CD4-positive, alpha-beta T cell (primary cell): ENCODE measurements at regions of chr6 and their contacts with region 1.

Region 1: GRCh38 chr6:95577304-95578105 is at the start of gene MANEA:
- DNase-seq: peak; percentile 59 to 93 (median 76)
- ATAC-seq: peak; percentile 84
- H3K4me3 ChIP-seq: peak within 1 kb of the TSS; percentile 91
- H3K4me3 Mint-ChIP-seq: peak within 1 kb of the TSS; percentile 95
- H3K27ac ChIP-seq: peak within 1 kb of the TSS; percentile 76 to 84
- H3K27ac Mint-ChIP-seq: peak within 1 kb of the TSS; percentile 95
- H3K4me1 ChIP-seq: peaks cover 11% of the 10 kb centered on the region
- H3K4me1 Mint-ChIP-seq: peaks cover 77% of the 10 kb centered on the region
- H3K27me3 ChIP-seq: no peaks in the 10 kb centered on the region
- H3K27me3 Mint-ChIP-seq: no peaks in the 10 kb centered on the region
- CTCF ChIP-seq: no peak
- total RNA-seq, gene MANEA: 6.1 to 8.0 TPM

Region 2: GRCh38 chr6:95478941-95479340 is 98.6 kb before region 1 on chr6:
- CTCF ChIA-PET with region 1: no interaction called
- POLR2A ChIA-PET with region 1: no interaction called
- intact Hi-C with region 1: no loop called
- DNase-seq: no peak
- ATAC-seq: no peak
- H3K4me3 ChIP-seq: no peak overlapping the region
- H3K4me3 Mint-ChIP-seq: no peak overlapping the region
- H3K27ac ChIP-seq: no peak overlapping the region
- H3K27ac Mint-ChIP-seq: no peak overlapping the region
- H3K4me1 ChIP-seq: no peaks in the 10 kb centered on the region
- H3K4me1 Mint-ChIP-seq: no peaks in the 10 kb centered on the region
- H3K27me3 ChIP-seq: no peaks in the 10 kb centered on the region
- H3K27me3 Mint-ChIP-seq: no peaks in the 10 kb centered on the region
- CTCF ChIP-seq: no peak

Region 3: GRCh38 chr6:95587989-95588388 is 10.5 kb after region 1 on chr6:
- CTCF ChIA-PET with region 1: interaction called, 5 read pairs
- POLR2A ChIA-PET with region 1: interaction called, 18 read pairs
- intact Hi-C with region 1: loop called in 1 of 2 experiments (anchors 2 kb)
- DNase-seq: no peak
- ATAC-seq: no peak
- H3K4me3 ChIP-seq: no peak overlapping the region
- H3K4me3 Mint-ChIP-seq: peak overlapping the region; percentile 5
- H3K27ac ChIP-seq: no peak overlapping the region
- H3K27ac Mint-ChIP-seq: no peak overlapping the region
- H3K4me1 ChIP-seq: no peaks in the 10 kb centered on the region
- H3K4me1 Mint-ChIP-seq: peaks cover 51% of the 10 kb centered on the region
- H3K27me3 ChIP-seq: no peaks in the 10 kb centered on the region
- H3K27me3 Mint-ChIP-seq: no peaks in the 10 kb centered on the region
- CTCF ChIP-seq: no peak

Region 4: GRCh38 chr6:96110878-96111277 is 533.4 kb after region 1 on chr6:
- CTCF ChIA-PET with region 1: no interaction called
- POLR2A ChIA-PET with region 1: no interaction called
- intact Hi-C with region 1: no loop called
- DNase-seq: no peak
- ATAC-seq: no peak
- H3K4me3 ChIP-seq: no peak overlapping the region
- H3K4me3 Mint-ChIP-seq: no peak overlapping the region
- H3K27ac ChIP-seq: no peak overlapping the region
- H3K27ac Mint-ChIP-seq: no peak overlapping the region
- H3K4me1 ChIP-seq: no peaks in the 10 kb centered on the region
- H3K4me1 Mint-ChIP-seq: no peaks in the 10 kb centered on the region
- H3K27me3 ChIP-seq: no peaks in the 10 kb centered on the region
- H3K27me3 Mint-ChIP-seq: no peaks in the 10 kb centered on the region
- CTCF ChIP-seq: no peak

Region 5: DNA sequence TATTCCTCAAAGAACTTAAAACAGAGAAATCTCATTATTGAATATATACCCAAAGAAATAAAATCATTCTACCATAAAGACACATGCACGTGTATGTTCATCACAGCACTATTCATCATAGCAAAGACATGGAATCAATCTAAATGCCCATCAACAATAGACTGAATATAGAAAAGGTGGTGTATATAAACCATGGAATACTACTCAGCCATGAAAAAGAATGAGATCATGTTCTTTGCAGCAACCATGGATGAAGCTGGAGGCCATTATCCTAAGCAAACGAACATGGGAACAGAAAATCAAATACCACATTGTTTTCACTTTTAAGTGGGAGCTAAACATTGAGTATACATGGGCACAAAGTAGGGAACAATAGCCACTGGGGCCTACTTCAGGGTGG is 1272.1 kb after region 1 on chr6:
- CTCF ChIA-PET with region 1: no interaction called
- POLR2A ChIA-PET with region 1: no interaction called
- intact Hi-C with region 1: loop called in 1 of 2 experiments (anchors 5 kb)
- DNase-seq: no peak
- ATAC-seq: no peak
- H3K4me3 ChIP-seq: no peak overlapping the region
- H3K4me3 Mint-ChIP-seq: no peak overlapping the region
- H3K27ac ChIP-seq: no peak overlapping the region
- H3K27ac Mint-ChIP-seq: no peak overlapping the region
- H3K4me1 ChIP-seq: no peaks in the 10 kb centered on the region
- H3K4me1 Mint-ChIP-seq: no peaks in the 10 kb centered on the region
- H3K27me3 ChIP-seq: no peaks in the 10 kb centered on the region
- H3K27me3 Mint-ChIP-seq: peaks cover 33% of the 10 kb centered on the region
- CTCF ChIP-seq: no peak

Region 6: GRCh38 chr6:96923871-96924493 is 1346.5 kb after region 1 on chr6:
- CTCF ChIA-PET with region 1: no interaction called
- POLR2A ChIA-PET with region 1: interaction called, 12 read pairs
- intact Hi-C with region 1: loop called (anchors 5 to 10 kb)
- DNase-seq: peak in 5 of 14 experiments; percentile 0 to 74 (median 2)
- ATAC-seq: no peak
- H3K4me3 ChIP-seq: peak overlapping the region; percentile 72
- H3K4me3 Mint-ChIP-seq: peak overlapping the region; percentile 93
- H3K27ac ChIP-seq: peak overlapping the region; percentile 93 to 96
- H3K27ac Mint-ChIP-seq: peak overlapping the region; percentile 98
- H3K4me1 ChIP-seq: peaks cover 17% of the 10 kb centered on the region
- H3K4me1 Mint-ChIP-seq: peaks cover 35% of the 10 kb centered on the region
- H3K27me3 ChIP-seq: no peaks in the 10 kb centered on the region
- H3K27me3 Mint-ChIP-seq: no peaks in the 10 kb centered on the region
- CTCF ChIP-seq: no peak

Region 7: DNA sequence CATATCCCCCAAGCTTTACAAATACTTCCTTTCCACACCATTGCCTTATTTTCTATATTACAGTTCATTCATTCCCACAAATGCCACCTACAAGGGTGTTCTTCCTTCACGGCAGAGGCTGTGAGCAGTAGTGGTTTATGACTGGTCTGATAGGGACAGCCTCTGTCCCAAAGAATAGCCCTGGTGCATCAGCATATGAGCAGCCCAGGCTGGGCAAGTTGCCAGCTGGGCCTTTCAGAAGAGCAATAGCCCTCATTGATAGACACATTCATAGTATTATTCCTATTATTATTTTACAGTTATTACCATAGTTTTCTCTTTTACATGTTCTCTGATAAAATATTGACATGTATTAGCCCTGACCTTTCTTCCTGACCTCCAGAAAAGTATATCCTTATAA is 1555.6 kb after region 1 on chr6:
- CTCF ChIA-PET with region 1: no interaction called
- POLR2A ChIA-PET with region 1: no interaction called
- intact Hi-C with region 1: no loop called
- DNase-seq: no peak
- ATAC-seq: no peak
- H3K4me3 ChIP-seq: no peak overlapping the region
- H3K4me3 Mint-ChIP-seq: no peak overlapping the region
- H3K27ac ChIP-seq: no peak overlapping the region
- H3K27ac Mint-ChIP-seq: no peak overlapping the region
- H3K4me1 ChIP-seq: no peaks in the 10 kb centered on the region
- H3K4me1 Mint-ChIP-seq: no peaks in the 10 kb centered on the region
- H3K27me3 ChIP-seq: no peaks in the 10 kb centered on the region
- H3K27me3 Mint-ChIP-seq: no peaks in the 10 kb centered on the region
- CTCF ChIP-seq: no peak

Region 8: GRCh38 chr6:97282726-97283617 is 1705.5 kb after region 1 on chr6 and contains the start of gene MMS22L:
- CTCF ChIA-PET with region 1: no interaction called
- POLR2A ChIA-PET with region 1: no interaction called
- intact Hi-C with region 1: loop called (anchors 5 to 10 kb)
- DNase-seq: peak; percentile 82 to 97 (median 90)
- ATAC-seq: peak; percentile 96
- H3K4me3 ChIP-seq: peak within 1 kb of the TSS; percentile 88
- H3K4me3 Mint-ChIP-seq: peak within 1 kb of the TSS; percentile 89
- H3K27ac ChIP-seq: peak within 1 kb of the TSS in 1 of 2 donors; percentile 38
- H3K27ac Mint-ChIP-seq: peak within 1 kb of the TSS; percentile 78
- H3K4me1 ChIP-seq: peaks cover 8% of the 10 kb centered on the region
- H3K4me1 Mint-ChIP-seq: peaks cover 28% of the 10 kb centered on the region
- H3K27me3 ChIP-seq: no peaks in the 10 kb centered on the region
- H3K27me3 Mint-ChIP-seq: no peaks in the 10 kb centered on the region
- CTCF ChIP-seq: no peak
- total RNA-seq, gene MMS22L: 5.3 to 5.8 TPM